Heart right ventricle (tissue), 16 donors: ENCODE measurements at regions of chr2 and their contacts with region 1.

Region 1: GRCh38 chr2:238288650-238289573 is 502 bp upstream of the PER2 start:
- DNase-seq: peak; percentile 97 to 99
- ATAC-seq: peak; percentile 83 to 93 (median 89)
- H3K4me3 ChIP-seq: peak overlapping the region; percentile 40 to 99 (median 79)
- H3K27ac ChIP-seq: peak overlapping the region; percentile 55 to 97 (median 90)
- H3K4me1 ChIP-seq: peaks cover 2 to 62% (median 48%) of the 10 kb centered on the region in 9 donors
- H3K27me3 ChIP-seq: no peaks in the 10 kb centered on the region
- CTCF ChIP-seq: peak in 7 of 9 donors; percentile 30 to 62 (median 34)

Region 2: DNA sequence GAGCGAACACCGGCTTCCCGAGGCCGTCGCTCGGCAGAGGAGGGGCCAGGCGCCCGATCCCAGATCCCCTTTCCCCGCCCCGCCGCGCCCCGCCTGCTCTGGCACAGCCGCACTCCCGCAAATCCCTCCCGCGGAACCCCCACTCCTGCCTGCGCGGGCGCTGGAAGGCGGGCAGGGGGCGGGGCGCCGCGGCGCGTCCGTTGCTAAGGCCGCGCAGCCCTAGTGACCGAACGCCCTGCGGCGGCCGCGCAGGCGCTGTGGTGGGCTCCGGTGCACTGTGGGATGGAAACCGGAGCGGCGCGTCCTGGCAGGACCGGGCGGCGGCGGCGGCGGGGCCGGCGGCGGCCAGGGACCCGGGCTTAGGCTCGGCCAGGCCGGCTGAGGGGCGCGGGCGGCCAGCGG is 31.3 kb after region 1 on chr2 and contains the start of gene TRAF3IP1:
- intact Hi-C with region 1: loop called in 3 of 10 experiments (anchors 1 to 2 kb)
- DNase-seq: peak; percentile 94
- ATAC-seq: peak; percentile 97 to 99 (median 98)
- H3K4me3 ChIP-seq: peak within 1 kb of the TSS; percentile 41 to 83 (median 75)
- H3K27ac ChIP-seq: peak within 1 kb of the TSS in 9 of 10 donors; percentile 21 to 68 (median 56)
- H3K4me1 ChIP-seq: peaks cover 4 to 32% (median 20%) of the 10 kb centered on the region in 9 donors
- H3K27me3 ChIP-seq: peaks cover 0 to 3% (median 0%) of the 10 kb centered on the region in 7 donors
- CTCF ChIP-seq: no peak
- total RNA-seq, gene TRAF3IP1: 8.3 to 20.4 (median 12.5) TPM

Region 3: DNA sequence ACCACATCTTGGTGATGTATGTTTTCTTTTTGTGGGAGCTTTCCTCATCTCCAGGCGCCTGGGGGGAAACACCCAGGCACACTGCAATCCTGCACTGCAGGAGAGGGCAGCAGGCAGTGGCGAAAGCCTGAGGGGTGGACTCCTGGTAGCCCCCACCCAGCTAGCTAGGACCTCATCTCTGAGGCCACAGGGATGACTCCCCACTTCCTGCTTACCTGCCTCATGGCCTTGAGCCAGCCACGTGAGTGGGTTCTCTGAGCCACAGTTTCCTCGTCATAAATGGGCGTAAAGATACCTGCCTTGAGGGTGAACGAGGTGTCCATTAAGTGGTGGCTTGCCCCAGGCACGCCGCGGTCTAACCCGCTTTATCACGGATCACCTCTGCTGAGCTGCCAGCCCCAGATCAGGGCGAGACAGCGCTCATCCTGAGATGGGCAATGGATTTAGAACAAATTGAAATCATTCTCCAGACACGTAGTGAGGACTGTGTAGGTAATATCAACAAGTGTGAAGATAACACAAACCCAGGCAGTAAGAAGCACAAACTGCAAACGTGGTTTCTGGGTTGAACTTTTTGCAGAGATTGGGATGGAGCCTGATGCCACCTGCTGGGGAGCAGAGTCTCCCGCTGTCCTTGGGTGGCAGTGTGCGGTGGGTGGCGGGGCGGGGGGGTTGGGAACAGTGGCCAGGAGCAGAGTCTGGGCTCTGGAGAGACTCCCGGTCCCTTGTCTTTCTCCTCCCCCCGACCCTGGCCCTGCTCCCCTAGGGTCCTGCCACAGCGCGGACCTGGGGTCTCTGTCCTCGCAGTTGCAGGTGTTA is 50.7 kb after region 1 on chr2:
- intact Hi-C with region 1: no loop called
- DNase-seq: no peak
- ATAC-seq: peak in 2 of 8 donors; percentile 29 to 31
- H3K4me3 ChIP-seq: no peak overlapping the region
- H3K27ac ChIP-seq: no peak overlapping the region
- H3K4me1 ChIP-seq: peaks cover 0 to 17% (median 0%) of the 10 kb centered on the region in 9 donors
- H3K27me3 ChIP-seq: no peaks in the 10 kb centered on the region
- CTCF ChIP-seq: peak in 4 of 9 donors; percentile 8 to 38 (median 31)